Breast epithelium (tissue), 4 donors: ENCODE measurements at regions of chr3 and their contacts with region 1.

Region 1: DNA sequence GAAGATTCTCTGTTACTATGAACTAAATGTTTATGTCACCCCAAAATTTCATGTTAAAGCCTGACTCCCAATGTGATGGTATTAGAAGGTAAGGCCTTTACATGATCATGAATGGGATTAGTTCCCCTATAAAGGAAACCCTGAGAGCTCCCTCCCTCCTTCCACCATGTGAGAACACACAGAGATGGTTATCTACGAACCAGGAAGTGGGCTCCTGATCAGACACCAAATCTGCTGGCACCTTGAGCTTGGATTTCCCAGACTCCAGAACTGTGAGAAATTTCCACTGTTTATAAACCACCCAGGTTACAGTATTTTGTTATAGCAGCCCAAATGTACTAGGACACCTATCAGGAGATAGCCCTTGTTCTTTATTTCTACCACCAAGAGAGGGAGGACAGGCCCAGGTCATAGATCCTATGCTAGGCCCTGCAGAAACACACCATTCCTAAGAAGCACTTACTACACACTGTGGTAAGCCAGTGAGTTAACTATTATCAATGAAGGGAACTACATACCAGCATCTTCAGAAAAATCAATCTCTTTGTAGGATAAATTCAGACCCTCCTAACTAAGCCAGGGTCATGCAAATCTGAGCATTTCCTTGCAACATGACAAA is 59.0 kb downstream of the PRKAR2A start:
- DNase-seq: no peak
- H3K4me3 ChIP-seq: no peak overlapping the region
- H3K27ac ChIP-seq: no peak overlapping the region
- H3K4me1 ChIP-seq: no peaks in the 10 kb centered on the region
- H3K27me3 ChIP-seq: no peaks in the 10 kb centered on the region
- CTCF ChIP-seq: no peak
- POLR2A ChIP-seq: no peak

Region 2: DNA sequence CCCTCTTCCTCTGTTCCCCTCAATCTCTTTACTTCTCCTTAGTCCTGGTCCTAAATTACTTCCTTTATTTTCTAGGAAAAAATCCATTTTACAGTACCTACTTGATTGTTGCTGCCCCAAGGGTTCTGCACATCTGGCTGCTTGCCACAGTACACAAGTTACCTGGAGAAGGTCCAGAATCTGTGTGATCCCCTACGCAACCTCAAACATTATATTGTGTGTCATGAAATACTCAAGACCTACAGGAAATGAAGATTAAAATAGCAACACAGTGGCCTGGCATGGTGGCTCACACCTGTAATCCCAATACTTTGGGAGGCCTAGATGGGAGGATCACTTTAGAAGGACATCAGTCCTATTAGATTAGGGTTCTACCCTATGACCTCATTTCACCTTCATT is 10.3 kb after region 1 on chr3:
- intact Hi-C with region 1: loop called (anchors 1 kb)
- DNase-seq: no peak
- H3K4me3 ChIP-seq: no peak overlapping the region
- H3K27ac ChIP-seq: no peak overlapping the region
- H3K4me1 ChIP-seq: no peaks in the 10 kb centered on the region
- H3K27me3 ChIP-seq: no peaks in the 10 kb centered on the region
- CTCF ChIP-seq: no peak
- POLR2A ChIP-seq: no peak